Mammary epithelial cell (primary cell): ENCODE measurements at regions of chr7 and their contacts with region 1.

Region 1: GRCh38 chr7:36291387-36292316 is 98.0 kb upstream of the ANLN start:
- DNase-seq: peak; percentile 52
- H3K4me3 ChIP-seq: peak overlapping the region; percentile 1 to 41 (median 14)
- H3K27ac ChIP-seq: no peak overlapping the region
- H3K4me1 ChIP-seq: peaks cover 10% of the 10 kb centered on the region
- H3K27me3 ChIP-seq: no peaks in the 10 kb centered on the region
- CTCF ChIP-seq: peak; percentile 97 to 99

Region 2: GRCh38 chr7:35701287-35701900 is 590.3 kb before region 1 on chr7:
- CTCF ChIA-PET with region 1: no interaction called
- dilution Hi-C with region 1: no loop called
- in situ Hi-C with region 1: no loop called
- intact Hi-C with region 1: loop called (anchors 10 kb)
- DNase-seq: no peak
- H3K4me3 ChIP-seq: no peak overlapping the region
- H3K27ac ChIP-seq: no peak overlapping the region
- H3K4me1 ChIP-seq: peaks cover 16% of the 10 kb centered on the region
- H3K27me3 ChIP-seq: no peaks in the 10 kb centered on the region
- CTCF ChIP-seq: no peak

Region 3: DNA sequence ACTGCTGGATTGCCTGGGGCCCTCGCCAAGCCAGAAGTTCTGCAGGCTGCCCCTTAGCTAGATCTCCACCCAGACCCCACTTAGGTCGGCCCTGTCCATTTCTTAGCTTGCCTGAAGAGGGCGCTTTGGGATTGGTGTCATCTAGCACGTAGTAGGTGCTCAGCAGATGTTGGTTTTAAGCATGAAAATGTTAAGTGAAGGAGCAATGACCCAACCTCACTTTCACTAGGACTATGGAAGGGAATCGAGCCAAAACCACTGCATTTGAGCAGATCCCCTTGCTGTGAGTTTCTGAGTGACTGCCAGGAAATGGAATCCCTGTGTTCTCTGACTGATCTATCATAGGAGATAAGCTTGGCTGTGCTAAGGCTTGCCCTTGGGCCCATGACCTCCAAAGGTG is 270.3 kb before region 1 on chr7:
- CTCF ChIA-PET with region 1: no interaction called
- dilution Hi-C with region 1: no loop called
- in situ Hi-C with region 1: no loop called
- intact Hi-C with region 1: loop called (anchors 1 kb)
- DNase-seq: no peak
- H3K4me3 ChIP-seq: no peak overlapping the region
- H3K27ac ChIP-seq: no peak overlapping the region
- H3K4me1 ChIP-seq: no peaks in the 10 kb centered on the region
- H3K27me3 ChIP-seq: no peaks in the 10 kb centered on the region
- CTCF ChIP-seq: peak; percentile 40 to 59

Region 4: DNA sequence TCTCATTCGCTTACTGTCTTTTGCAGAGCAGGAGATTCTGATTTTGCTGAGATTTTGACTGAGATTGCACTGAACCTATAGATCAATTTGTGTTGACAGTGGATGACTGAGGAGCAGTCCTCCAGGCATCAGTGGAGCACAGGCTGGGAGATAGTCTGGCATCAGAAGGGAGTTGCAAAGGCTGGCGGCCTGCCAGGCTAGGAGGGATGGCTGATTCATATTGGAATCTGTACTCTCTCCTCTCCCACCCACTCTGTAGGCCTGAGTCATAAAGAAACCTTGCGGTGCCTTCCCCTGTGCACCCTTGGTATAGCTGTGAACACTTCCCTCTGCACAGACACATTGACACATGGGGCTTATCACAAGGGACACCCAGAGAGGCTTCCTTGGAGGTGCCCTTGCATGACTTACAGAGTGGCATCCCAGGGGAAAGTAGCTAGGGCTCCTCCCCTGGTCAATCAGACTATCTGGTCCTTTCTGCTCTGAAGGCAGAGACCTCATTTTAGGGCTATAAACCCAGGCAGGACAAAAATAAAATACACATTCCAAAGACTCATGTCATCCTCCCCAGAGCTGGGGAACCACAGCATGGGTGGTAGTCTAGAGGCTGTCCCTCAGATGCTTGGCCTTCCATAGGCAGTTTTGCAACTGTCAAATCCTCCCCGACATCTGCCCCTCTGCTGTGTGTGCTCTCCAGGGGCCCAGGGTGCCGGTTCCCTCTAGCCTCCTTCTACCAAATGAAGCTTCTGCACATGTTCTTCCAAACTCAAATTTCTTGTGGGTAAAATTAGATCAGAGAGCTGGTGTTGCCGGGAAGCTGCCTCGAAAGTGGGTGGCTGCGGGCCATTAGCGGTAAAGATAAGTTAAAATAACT is 176.0 kb before region 1 on chr7:
- CTCF ChIA-PET with region 1: no interaction called
- dilution Hi-C with region 1: no loop called
- in situ Hi-C with region 1: no loop called
- intact Hi-C with region 1: loop called (anchors 5 kb)
- DNase-seq: peak; percentile 95
- H3K4me3 ChIP-seq: peak overlapping the region in 1 of 3 experiments; percentile 11
- H3K27ac ChIP-seq: peak overlapping the region; percentile 69
- H3K4me1 ChIP-seq: peaks cover 42% of the 10 kb centered on the region
- H3K27me3 ChIP-seq: no peaks in the 10 kb centered on the region
- CTCF ChIP-seq: no peak

Region 5: GRCh38 chr7:36315309-36316133 is 23.9 kb after region 1 on chr7:
- CTCF ChIA-PET with region 1: no interaction called
- dilution Hi-C with region 1: no loop called
- in situ Hi-C with region 1: no loop called
- intact Hi-C with region 1: loop called (anchors 1 kb)
- DNase-seq: no peak
- H3K4me3 ChIP-seq: no peak overlapping the region
- H3K27ac ChIP-seq: no peak overlapping the region
- H3K4me1 ChIP-seq: no peaks in the 10 kb centered on the region
- H3K27me3 ChIP-seq: peaks cover 2% of the 10 kb centered on the region
- CTCF ChIP-seq: no peak

Region 6: GRCh38 chr7:36348256-36348655 is 56.6 kb after region 1 on chr7:
- CTCF ChIA-PET with region 1: no interaction called
- dilution Hi-C with region 1: no loop called
- in situ Hi-C with region 1: no loop called
- intact Hi-C with region 1: no loop called
- DNase-seq: no peak
- H3K4me3 ChIP-seq: no peak overlapping the region
- H3K27ac ChIP-seq: no peak overlapping the region
- H3K4me1 ChIP-seq: no peaks in the 10 kb centered on the region
- H3K27me3 ChIP-seq: no peaks in the 10 kb centered on the region
- CTCF ChIP-seq: no peak

Region 7: DNA sequence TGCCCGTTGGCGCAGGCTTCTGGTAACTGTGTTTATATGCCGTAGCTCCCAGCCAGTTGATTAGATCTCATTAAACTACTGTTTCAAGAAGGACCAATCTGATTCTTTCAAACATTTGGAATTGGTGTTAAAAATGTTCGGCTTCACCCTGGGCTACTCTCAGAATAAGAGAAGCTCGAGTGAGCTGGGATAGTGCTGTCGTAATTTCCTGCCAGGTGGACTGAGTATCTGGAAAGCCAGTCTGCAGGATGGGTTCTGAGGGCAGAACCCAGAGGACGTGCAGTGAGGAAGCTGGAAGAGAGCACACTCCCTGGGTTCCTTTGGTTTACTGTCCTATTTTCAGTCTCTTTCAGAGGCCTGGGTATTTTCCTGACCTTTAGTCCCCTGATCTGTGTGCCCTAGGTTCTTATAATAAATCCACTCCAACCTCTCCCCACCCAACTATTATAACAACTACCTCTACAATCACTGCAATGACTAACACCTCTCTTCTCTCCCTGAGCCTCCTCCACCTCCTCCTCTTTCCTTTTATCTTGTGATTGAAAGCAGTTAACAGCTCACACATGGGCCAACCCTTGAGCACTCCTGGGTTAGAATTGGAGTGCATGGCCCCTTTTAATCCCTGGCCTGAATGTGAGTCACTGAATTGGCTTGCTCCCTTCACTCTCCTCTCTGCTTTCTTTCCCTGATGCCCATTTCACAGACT is 369.6 kb after region 1 on chr7:
- CTCF ChIA-PET with region 1: no interaction called
- dilution Hi-C with region 1: no loop called
- in situ Hi-C with region 1: no loop called
- intact Hi-C with region 1: no loop called
- DNase-seq: peak; percentile 92
- H3K4me3 ChIP-seq: no peak overlapping the region
- H3K27ac ChIP-seq: peak overlapping the region; percentile 9
- H3K4me1 ChIP-seq: peaks cover 34% of the 10 kb centered on the region
- H3K27me3 ChIP-seq: no peaks in the 10 kb centered on the region
- CTCF ChIP-seq: no peak